OCI-LY7 (cell line): ENCODE measurements at regions of chr4 and their contacts with region 1.

Region 1: DNA sequence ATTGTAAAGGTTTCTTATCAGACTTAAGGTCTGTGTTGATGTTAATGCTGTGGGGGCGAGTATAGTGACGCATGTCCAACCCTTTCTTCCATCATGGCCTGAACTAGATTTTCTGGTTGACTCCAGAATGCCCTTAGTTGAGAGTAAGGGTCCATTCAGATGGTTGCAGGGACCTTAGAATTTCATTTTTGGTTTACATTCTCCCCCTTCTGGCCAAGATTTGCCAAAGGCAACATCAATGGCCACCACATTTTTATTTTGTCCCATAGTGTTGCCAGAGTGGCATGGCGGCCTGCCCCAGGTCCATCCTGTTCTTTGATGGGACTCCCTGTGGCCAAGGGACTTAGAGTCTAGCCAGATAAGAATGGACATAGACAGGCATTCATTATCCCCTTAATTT is 368.5 kb downstream of the GPM6A start:
- DNase-seq: peak; percentile 39
- H3K4me3 ChIP-seq: no peak overlapping the region
- H3K27ac ChIP-seq: no peak overlapping the region
- H3K4me1 ChIP-seq: peaks cover 6% of the 10 kb centered on the region
- CTCF ChIP-seq: peak; percentile 56; the same call in 1 of the 2 replicates

Region 2: GRCh38 chr4:175198056-175198455 is 245.5 kb before region 1 on chr4:
- CTCF ChIA-PET with region 1: no interaction called
- POLR2A ChIA-PET with region 1: no interaction called
- intact Hi-C with region 1: no loop called
- DNase-seq: no peak
- H3K4me3 ChIP-seq: no peak overlapping the region
- H3K27ac ChIP-seq: no peak overlapping the region
- H3K4me1 ChIP-seq: peaks cover 11% of the 10 kb centered on the region
- CTCF ChIP-seq: no peak

Region 3: GRCh38 chr4:175424111-175424510 is 19.4 kb before region 1 on chr4:
- CTCF ChIA-PET with region 1: no interaction called
- POLR2A ChIA-PET with region 1: interaction called, 14 read pairs
- intact Hi-C with region 1: no loop called
- DNase-seq: no peak
- H3K4me3 ChIP-seq: no peak overlapping the region
- H3K27ac ChIP-seq: no peak overlapping the region
- H3K4me1 ChIP-seq: no peaks in the 10 kb centered on the region
- CTCF ChIP-seq: no peak

Region 4: GRCh38 chr4:175456131-175456530 is 12.6 kb after region 1 on chr4:
- CTCF ChIA-PET with region 1: no interaction called
- POLR2A ChIA-PET with region 1: interaction called, 14 read pairs
- intact Hi-C with region 1: no loop called
- DNase-seq: no peak
- H3K4me3 ChIP-seq: no peak overlapping the region
- H3K27ac ChIP-seq: no peak overlapping the region
- H3K4me1 ChIP-seq: peaks cover 7% of the 10 kb centered on the region
- CTCF ChIP-seq: no peak